Tibial artery (tissue), 4 donors: ENCODE measurements at regions of chr12 and their contacts with region 1.

Region 1: DNA sequence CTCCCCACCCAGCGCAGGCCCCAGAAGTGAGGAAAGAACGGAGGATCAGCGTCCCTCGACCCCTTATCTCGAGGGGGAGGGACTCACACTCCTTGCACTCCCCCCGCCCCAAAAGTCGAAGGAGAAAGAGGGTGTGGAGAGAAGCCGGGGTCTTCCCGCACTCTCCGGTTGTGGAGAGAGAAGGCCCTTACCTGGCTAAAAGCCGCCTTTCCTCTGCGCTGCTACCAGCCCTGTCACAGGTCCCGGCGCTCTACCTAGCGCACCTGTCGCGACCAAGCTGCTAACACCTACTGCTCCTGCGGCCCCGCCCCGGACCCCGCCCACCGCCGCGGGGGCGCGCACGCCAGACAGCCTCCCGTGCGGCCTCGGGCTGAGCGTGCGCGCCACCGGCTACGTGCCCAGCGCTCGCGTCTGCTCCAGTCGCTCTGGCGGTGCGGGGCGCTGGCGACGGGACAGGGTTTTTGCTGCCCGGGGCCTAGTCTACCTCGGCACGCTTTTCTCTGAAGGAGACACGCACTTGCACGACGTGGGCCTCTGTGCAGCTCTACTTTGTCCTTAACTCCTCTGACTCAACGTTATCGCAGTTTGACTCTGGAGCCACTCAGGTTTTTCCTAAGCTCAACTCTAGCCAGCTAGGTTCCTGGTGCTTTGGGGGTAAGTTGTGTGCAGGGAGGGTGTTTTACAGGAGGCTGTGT is at the start of gene LIMA1:
- DNase-seq: peak; percentile 86 to 94
- H3K4me3 ChIP-seq: peak within 1 kb of the TSS; percentile 88 to 98
- H3K27ac ChIP-seq: peak within 1 kb of the TSS; percentile 75 to 80
- H3K4me1 ChIP-seq: peaks cover 0 to 29% (median 9%) of the 10 kb centered on the region in 4 donors
- H3K27me3 ChIP-seq: no peaks in the 10 kb centered on the region
- CTCF ChIP-seq: peak; percentile 57 to 64

Region 2: DNA sequence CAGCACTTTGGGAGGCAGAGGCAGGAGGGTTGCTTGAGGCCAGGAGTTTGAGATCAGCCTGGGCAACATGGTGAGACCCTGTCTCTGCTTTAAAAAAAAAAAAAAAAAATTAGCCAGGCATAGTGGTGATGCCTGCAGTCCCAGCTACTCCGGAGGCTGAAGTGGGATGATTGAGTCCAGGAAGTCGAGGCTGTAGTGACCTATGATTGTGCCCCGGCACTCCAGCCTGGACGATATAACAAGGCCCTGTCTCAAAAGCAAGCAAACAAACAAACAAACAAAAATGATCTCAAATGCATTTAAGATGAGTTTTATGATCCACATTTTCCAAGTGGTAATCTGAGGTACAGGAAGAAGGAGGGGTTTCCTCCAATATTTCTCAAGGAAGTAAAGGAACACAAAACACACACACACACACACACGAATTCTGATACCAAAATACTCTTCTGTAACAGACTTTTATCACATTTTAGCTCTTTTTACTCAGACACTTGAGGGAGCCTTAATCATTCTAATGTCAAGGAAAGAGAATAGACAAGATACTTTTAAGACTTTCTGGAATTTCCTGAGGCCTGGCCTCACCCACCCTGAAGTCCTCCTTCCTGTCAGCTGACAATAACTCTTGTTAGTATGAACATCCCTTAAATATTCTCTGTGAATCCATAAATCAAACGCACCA is 71.8 kb before region 1 on chr12:
- intact Hi-C with region 1: no loop called
- DNase-seq: no peak
- H3K4me3 ChIP-seq: no peak overlapping the region
- H3K27ac ChIP-seq: peak overlapping the region in 1 of 2 donors; percentile 43
- H3K4me1 ChIP-seq: peaks cover 0 to 32% (median 12%) of the 10 kb centered on the region in 4 donors
- H3K27me3 ChIP-seq: no peaks in the 10 kb centered on the region
- CTCF ChIP-seq: no peak

Region 3: GRCh38 chr12:50222275-50222795 is 61.0 kb before region 1 on chr12:
- intact Hi-C with region 1: loop called (anchors 10 kb)
- DNase-seq: peak; percentile 71 to 82
- H3K4me3 ChIP-seq: peak overlapping the region; percentile 52 to 58
- H3K27ac ChIP-seq: peak overlapping the region; percentile 76 to 84
- H3K4me1 ChIP-seq: peaks cover 0 to 40% (median 30%) of the 10 kb centered on the region in 4 donors
- H3K27me3 ChIP-seq: no peaks in the 10 kb centered on the region
- CTCF ChIP-seq: peak; percentile 33 to 42